ENCODE measurements at regions of chr5 and their contacts with region 1.

Region 1: DNA sequence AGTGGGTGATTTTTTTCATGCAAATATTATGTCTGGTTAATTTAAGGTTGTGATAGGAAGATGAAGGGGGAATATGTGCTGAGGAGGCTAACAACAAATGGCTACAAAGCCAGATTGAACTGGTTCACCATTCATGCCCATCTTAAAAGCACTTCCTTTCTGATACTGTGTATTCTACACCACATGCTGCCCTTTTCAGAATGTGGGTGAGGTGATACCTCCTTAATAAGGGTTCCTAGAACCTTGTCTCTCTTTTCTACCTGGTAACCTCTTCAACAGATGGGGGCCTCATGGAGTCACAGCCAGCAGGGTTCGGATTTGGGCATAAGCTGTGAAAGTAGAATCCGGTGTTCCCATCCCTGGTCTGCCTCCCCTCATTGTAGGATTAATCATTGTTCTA is 1064.0 kb upstream of the SEMA6A start:
- DNase-seq: no peak
- H3K4me3 ChIP-seq: no peak overlapping the region
- H3K27ac ChIP-seq: no peak overlapping the region
- H3K4me1 ChIP-seq: no peaks in the 10 kb centered on the region
- H3K27me3 ChIP-seq: no peaks in the 10 kb centered on the region
- CTCF ChIP-seq: no peak
- EP300 ChIP-seq: no peak
- POLR2A ChIP-seq: no peak

Region 2: GRCh38 chr5:117143406-117143805 is 495.2 kb before region 1 on chr5:
- in situ Hi-C with region 1: no loop called
- intact Hi-C with region 1: no loop called
- DNase-seq: no peak
- H3K4me3 ChIP-seq: no peak overlapping the region
- H3K27ac ChIP-seq: no peak overlapping the region
- H3K4me1 ChIP-seq: no peaks in the 10 kb centered on the region
- H3K27me3 ChIP-seq: no peaks in the 10 kb centered on the region
- CTCF ChIP-seq: no peak
- EP300 ChIP-seq: no peak
- POLR2A ChIP-seq: no peak

Region 3: DNA sequence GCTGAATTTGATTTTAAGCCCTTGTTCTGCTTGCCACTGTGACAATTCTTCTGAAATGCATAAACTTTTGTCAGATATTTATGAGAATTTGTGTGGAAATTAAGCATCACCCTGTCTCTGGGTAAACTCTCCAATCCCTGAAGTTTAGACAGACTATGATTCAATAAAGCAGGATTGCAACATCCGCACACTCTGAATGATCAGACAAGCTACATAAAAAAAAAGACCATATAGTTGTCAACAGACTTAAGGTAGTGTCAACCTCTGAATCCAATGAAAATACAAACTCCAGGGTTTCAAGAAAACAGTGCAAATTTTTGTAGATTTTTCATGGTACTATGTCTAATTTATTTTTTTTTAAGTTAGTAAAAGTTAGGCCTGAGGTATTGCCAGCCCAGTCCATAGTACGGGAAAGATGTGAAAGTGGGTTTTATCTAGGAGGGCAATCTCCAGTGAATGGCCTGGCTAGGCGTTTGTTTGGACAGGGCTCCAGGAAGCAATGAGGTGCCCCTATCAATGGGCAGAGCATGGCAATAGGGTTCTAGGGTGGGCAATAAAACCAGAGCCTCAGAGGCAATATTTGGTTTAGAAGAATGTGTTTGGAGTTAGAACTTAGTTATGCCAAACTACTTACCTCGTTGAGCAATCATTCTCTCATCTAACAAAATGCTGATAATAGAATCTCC is 301.4 kb before region 1 on chr5:
- in situ Hi-C with region 1: no loop called
- intact Hi-C with region 1: no loop called
- DNase-seq: peak; percentile 28
- H3K4me3 ChIP-seq: no peak overlapping the region
- H3K27ac ChIP-seq: no peak overlapping the region
- H3K4me1 ChIP-seq: peaks cover 0 to 8% (median 0%) of the 10 kb centered on the region in 4 donors
- H3K27me3 ChIP-seq: no peaks in the 10 kb centered on the region
- CTCF ChIP-seq: no peak
- EP300 ChIP-seq: no peak
- POLR2A ChIP-seq: no peak

Region 4: GRCh38 chr5:117588621-117589020 is 50.0 kb before region 1 on chr5:
- in situ Hi-C with region 1: no loop called
- intact Hi-C with region 1: loop called (anchors 2 kb)
- DNase-seq: no peak
- H3K4me3 ChIP-seq: no peak overlapping the region
- H3K27ac ChIP-seq: no peak overlapping the region
- H3K4me1 ChIP-seq: no peaks in the 10 kb centered on the region
- H3K27me3 ChIP-seq: no peaks in the 10 kb centered on the region
- CTCF ChIP-seq: no peak
- EP300 ChIP-seq: no peak
- POLR2A ChIP-seq: no peak

Measured in transverse colon (tissue), 4 donors.